ENCODE measurements at regions of chr9 and their contacts with region 1.

Region 1: GRCh38 chr9:76369583-76369982 is 24.6 kb downstream of the RFK start:
- H3K4me3 ChIP-seq: no peak overlapping the region
- H3K27ac ChIP-seq: peak overlapping the region; percentile 59
- H3K4me1 ChIP-seq: peaks cover 28% of the 10 kb centered on the region
- CTCF ChIP-seq: no peak

Region 2: GRCh38 chr9:76353280-76353679 is 16.3 kb before region 1 on chr9:
- CTCF ChIA-PET with region 1: no interaction called
- POLR2A ChIA-PET with region 1: interaction called, 16 read pairs
- H3K4me3 ChIP-seq: no peak overlapping the region
- H3K27ac ChIP-seq: no peak overlapping the region
- H3K4me1 ChIP-seq: no peaks in the 10 kb centered on the region
- CTCF ChIP-seq: no peak

Measured in HEK293 (cell line).